CD4-positive, alpha-beta memory T cell (primary cell): ENCODE measurements at regions of chr4 and their contacts with region 1.

Region 1: DNA sequence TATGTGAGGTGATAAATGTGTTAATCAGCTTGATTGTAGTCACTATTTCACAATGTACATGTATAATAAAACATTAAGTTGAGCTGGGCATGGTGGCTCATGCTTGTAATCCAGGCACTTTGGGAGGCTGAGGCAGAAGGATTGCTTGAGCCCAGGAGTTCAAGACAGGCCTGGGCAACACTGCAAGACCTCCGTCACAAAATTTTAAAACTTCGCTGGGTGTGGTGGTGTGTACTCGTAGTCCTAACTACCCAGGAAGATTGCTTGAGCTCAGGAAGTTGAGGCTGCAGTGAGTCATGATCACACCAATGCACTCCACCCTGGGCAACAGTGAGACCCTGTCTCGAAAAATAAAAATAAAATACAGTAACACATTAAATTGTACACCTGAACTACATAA is 20.1 kb downstream of the LYAR start:
- DNase-seq: peak; percentile 53 to 81 (median 73)
- H3K4me3 ChIP-seq: no peak overlapping the region
- H3K4me3 Mint-ChIP-seq: peak overlapping the region; percentile 59 to 88 (median 70)
- H3K27ac ChIP-seq: peak overlapping the region; percentile 76
- H3K27ac Mint-ChIP-seq: peak overlapping the region; percentile 94 to 98 (median 97)
- H3K4me1 ChIP-seq: peaks cover 50% of the 10 kb centered on the region
- H3K4me1 Mint-ChIP-seq: peaks cover 26 to 49% (median 32%) of the 10 kb centered on the region in 4 donors
- H3K27me3 ChIP-seq: no peaks in the 10 kb centered on the region
- H3K27me3 Mint-ChIP-seq: no peaks in the 10 kb centered on the region

Region 2: DNA sequence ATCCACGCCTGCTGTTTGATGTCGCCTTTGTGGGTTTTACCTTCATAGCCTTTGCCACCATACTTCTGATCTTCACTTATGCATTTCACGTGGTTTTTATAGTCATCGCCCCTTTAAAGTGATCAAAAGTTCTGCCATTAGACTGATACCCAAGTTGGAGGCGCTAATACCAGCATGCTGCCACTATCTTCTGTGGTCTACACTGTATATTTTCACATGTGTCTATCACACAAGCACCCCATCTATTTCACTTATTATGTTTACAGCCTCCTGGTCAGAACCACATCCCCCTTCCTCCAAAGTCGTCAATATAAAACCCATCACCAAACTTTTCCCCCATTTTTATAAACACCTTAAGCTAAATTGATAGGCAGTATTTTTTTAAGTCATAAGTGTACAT is 11.9 kb after region 1 on chr4:
- CTCF ChIA-PET with region 1: interaction called, 5 read pairs
- POLR2A ChIA-PET with region 1: interaction called, 15 read pairs
- intact Hi-C with region 1: no loop called
- DNase-seq: no peak
- H3K4me3 ChIP-seq: no peak overlapping the region
- H3K4me3 Mint-ChIP-seq: no peak overlapping the region
- H3K27ac ChIP-seq: no peak overlapping the region
- H3K27ac Mint-ChIP-seq: peak overlapping the region in 2 of 7 donors; percentile 7 to 55
- H3K4me1 ChIP-seq: no peaks in the 10 kb centered on the region
- H3K4me1 Mint-ChIP-seq: peaks cover 2 to 22% (median 14%) of the 10 kb centered on the region in 4 donors
- H3K27me3 ChIP-seq: no peaks in the 10 kb centered on the region
- H3K27me3 Mint-ChIP-seq: no peaks in the 10 kb centered on the region

Region 3: DNA sequence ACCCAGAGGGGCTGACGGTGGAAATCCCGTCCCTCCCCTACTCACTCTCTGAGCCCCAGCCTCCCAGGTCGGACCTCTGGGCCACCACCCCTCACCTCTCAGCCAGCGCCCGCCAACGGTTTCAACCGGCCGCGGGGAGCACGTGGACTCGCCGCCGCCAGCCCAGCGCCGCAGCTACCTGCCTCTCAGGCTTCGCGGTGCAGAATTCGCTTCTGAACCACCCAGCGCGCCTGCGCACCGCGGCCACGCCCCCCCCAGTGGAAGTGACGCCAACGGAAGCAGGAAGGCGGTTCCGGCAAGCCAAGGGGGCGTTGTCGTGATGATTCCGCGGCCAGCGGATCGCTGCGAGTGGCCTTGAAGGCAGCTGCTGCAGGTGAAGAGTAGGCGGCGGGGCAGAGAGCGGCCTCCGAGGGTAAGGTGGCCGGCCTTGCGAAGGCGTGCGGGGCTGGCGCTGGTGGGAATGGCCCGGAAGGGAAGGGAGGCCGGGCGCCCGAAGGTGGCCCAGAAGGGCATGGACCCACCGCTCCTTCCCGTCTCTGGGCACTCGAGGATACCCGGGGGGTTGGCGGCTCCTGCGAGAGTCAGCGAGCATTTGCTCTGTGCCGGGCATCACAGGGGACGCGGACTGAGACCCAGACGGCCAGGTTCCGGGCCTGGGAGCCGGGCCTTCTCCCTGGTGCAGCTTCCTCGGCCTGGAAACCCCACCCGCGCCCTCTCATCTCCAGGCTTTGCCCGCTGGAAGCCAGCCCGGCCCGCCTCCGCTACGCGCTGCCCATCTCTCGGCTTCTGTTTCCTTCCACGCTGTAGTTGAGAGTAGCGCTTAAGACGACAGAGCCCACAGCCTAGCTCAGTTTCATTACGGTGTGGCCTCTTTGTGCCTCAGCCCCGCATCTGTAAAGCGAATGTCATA is 20.3 kb after region 1 on chr4 and contains the starts of genes LYAR and ZBTB49:
- CTCF ChIA-PET with region 1: interaction called, 5 read pairs
- POLR2A ChIA-PET with region 1: interaction called, 31 read pairs
- intact Hi-C with region 1: loop called (anchors 1 kb)
- DNase-seq: peak; percentile 96 to 98 (median 97)
- H3K4me3 ChIP-seq: peak within 1 kb of the TSS; percentile 86 to 93
- H3K4me3 Mint-ChIP-seq: peak within 1 kb of the TSS; percentile 93 to 98 (median 96)
- H3K27ac ChIP-seq: peak within 1 kb of the TSS; percentile 76
- H3K27ac Mint-ChIP-seq: peak within 1 kb of the TSS; percentile 83 to 96 (median 94)
- H3K4me1 ChIP-seq: peaks cover 30% of the 10 kb centered on the region
- H3K4me1 Mint-ChIP-seq: peaks cover 48 to 83% (median 64%) of the 10 kb centered on the region in 4 donors
- H3K27me3 ChIP-seq: no peaks in the 10 kb centered on the region
- H3K27me3 Mint-ChIP-seq: no peaks in the 10 kb centered on the region
- total RNA-seq, gene LYAR: 74.5 to 79.8 TPM
- total RNA-seq, gene ZBTB49: 18.5 to 20.0 TPM

Region 4: GRCh38 chr4:4334798-4335520 is 65.1 kb after region 1 on chr4:
- CTCF ChIA-PET with region 1: interaction called, 11 read pairs
- POLR2A ChIA-PET with region 1: interaction called, 3 read pairs
- intact Hi-C with region 1: no loop called
- DNase-seq: peak; percentile 73 to 77 (median 76)
- H3K4me3 ChIP-seq: no peak overlapping the region
- H3K4me3 Mint-ChIP-seq: peak overlapping the region in 5 of 8 donors; percentile 30 to 58 (median 41)
- H3K27ac ChIP-seq: no peak overlapping the region
- H3K27ac Mint-ChIP-seq: peak overlapping the region in 6 of 7 donors; percentile 3 to 42 (median 37)
- H3K4me1 ChIP-seq: peaks cover 4% of the 10 kb centered on the region
- H3K4me1 Mint-ChIP-seq: peaks cover 4 to 10% (median 7%) of the 10 kb centered on the region in 4 donors
- H3K27me3 ChIP-seq: no peaks in the 10 kb centered on the region
- H3K27me3 Mint-ChIP-seq: no peaks in the 10 kb centered on the region

Region 5: GRCh38 chr4:4344915-4345527 is 75.2 kb after region 1 on chr4:
- CTCF ChIA-PET with region 1: no interaction called
- POLR2A ChIA-PET with region 1: interaction called, 12 read pairs
- intact Hi-C with region 1: no loop called
- DNase-seq: no peak
- H3K4me3 ChIP-seq: no peak overlapping the region
- H3K4me3 Mint-ChIP-seq: no peak overlapping the region
- H3K27ac ChIP-seq: no peak overlapping the region
- H3K27ac Mint-ChIP-seq: peak overlapping the region in 1 of 7 donors; percentile 70
- H3K4me1 ChIP-seq: peaks cover 21% of the 10 kb centered on the region
- H3K4me1 Mint-ChIP-seq: peaks cover 6 to 33% (median 27%) of the 10 kb centered on the region in 4 donors
- H3K27me3 ChIP-seq: no peaks in the 10 kb centered on the region
- H3K27me3 Mint-ChIP-seq: no peaks in the 10 kb centered on the region

Region 6: DNA sequence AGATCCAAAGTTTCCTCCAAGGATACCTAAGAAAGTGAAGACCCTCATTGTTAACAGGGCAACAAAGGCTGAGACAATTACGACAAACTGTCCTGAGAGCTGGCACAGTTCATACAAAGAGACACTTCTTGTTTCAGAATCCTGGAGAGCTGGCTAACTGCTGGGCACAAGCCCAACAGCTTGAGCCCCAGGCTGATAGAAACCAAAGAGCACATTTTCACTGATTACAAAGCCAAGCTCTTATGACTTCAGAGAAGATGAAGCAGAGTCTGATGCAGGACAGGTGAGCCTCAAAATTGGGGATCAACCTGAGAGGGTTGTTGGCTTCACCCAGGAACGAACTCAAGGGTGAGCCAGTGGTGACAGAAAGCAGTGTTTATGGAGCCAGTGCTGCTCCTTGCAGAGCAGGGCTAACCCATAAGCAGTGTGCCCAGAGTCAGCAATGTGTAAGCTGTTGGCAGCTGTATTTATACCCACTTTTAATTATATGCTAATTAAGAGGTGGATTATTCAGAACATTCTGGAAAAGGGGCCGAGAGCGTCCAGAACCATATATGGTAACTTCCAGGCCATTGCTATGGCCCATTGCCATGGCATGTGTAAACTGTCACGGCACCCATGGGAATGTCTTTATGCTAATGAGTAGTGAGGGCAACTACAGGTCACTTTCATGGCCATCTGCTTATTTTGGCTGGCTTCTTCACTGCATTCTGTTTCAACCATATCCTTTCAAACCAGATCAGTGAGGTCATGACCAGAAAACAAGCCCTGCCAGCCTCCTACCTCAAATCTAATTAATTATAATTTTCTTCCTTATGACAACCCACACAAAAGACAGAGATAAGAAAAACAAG is 1254.8 kb after region 1 on chr4:
- CTCF ChIA-PET with region 1: no interaction called
- POLR2A ChIA-PET with region 1: no interaction called
- intact Hi-C with region 1: no loop called
- DNase-seq: no peak
- H3K4me3 ChIP-seq: no peak overlapping the region
- H3K4me3 Mint-ChIP-seq: no peak overlapping the region
- H3K27ac ChIP-seq: no peak overlapping the region
- H3K27ac Mint-ChIP-seq: no peak overlapping the region
- H3K4me1 ChIP-seq: no peaks in the 10 kb centered on the region
- H3K4me1 Mint-ChIP-seq: no peaks in the 10 kb centered on the region
- H3K27me3 ChIP-seq: no peaks in the 10 kb centered on the region
- H3K27me3 Mint-ChIP-seq: no peaks in the 10 kb centered on the region